ENCODE measurements at regions of chr17 and their contacts with region 1.

Region 1: DNA sequence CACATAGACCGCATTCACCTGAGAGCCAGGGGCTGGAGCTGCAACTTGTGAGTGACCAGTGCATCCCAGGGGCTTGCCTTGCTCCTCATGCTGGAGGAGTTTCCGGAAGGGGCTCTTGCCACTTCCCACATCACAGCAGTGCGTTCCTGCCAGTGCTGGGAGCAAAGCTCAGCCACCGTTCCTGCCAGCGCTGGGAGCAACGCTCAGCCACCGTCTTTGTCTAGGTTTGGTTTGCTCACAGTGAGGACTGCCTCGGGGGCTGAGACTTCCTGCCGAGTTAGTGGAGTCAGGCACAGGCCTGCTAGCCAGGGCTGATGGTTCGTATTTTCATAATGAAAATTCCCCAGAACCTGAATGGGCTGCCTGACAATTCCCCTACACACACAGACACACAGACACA is 5.4 kb upstream of the CHRNE start:
- DNase-seq: no peak
- H3K4me3 ChIP-seq: no peak overlapping the region
- H3K27ac ChIP-seq: no peak overlapping the region
- H3K4me1 ChIP-seq: no peaks in the 10 kb centered on the region
- H3K27me3 ChIP-seq: no peaks in the 10 kb centered on the region
- CTCF ChIP-seq: no peak
- EP300 ChIP-seq: no peak
- POLR2A ChIP-seq: no peak

Region 2: DNA sequence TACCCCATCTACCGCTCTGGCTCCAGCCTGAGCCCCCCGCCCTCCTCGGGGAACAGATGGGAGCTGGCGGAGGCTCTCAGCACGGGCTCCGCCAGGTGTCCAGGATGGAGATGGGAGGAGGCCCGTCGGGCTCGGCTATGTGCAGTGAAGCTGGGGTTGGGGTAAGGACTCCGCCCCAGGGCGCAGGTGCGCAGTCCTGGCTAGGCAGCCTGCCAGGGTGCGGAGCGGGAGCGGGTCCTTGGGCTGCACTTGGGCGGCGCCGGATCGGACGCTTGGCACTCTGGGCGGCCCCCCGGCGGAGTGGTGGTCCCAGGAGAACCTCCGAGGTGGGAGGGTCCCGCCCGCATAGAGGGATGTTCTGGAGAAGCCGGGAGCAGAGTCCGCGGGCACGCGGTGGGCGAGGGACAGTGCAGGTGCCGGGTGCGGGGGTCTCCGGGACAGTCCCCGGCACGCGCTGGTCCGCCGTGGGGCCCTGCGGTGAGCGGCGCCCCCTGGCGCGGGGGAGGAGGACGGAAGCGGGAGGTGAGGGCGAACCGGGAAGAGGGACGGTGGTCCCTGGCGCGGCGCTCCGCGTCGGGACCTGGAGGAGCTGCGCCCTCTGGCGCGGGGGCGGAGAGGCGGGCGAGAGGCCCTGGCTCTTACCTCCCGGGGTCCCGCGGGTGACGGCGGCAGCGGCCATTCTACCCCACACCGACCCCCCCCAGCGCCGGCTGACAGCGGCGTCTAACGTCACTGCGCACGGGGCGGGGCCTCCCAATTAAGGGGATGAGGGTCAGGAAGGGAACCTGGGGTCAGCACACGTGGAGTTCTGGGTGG is 78.9 kb after region 1 on chr17 and contains the start of gene CAMTA2:
- intact Hi-C with region 1: loop called in 1 of 4 experiments (anchors 5 kb)
- DNase-seq: peak; percentile 90 to 93 (median 92)
- H3K4me3 ChIP-seq: peak within 1 kb of the TSS; percentile 51
- H3K27ac ChIP-seq: peak within 1 kb of the TSS; percentile 95 to 97
- H3K4me1 ChIP-seq: peaks cover 11% of the 10 kb centered on the region
- H3K27me3 ChIP-seq: no peaks in the 10 kb centered on the region
- CTCF ChIP-seq: peak; percentile 50 to 83 (median 79)
- EP300 ChIP-seq: no peak
- POLR2A ChIP-seq: peak; percentile 72
- total RNA-seq, gene CAMTA2: 10.2 to 71.2 (median 35.7) TPM

Region 3: DNA sequence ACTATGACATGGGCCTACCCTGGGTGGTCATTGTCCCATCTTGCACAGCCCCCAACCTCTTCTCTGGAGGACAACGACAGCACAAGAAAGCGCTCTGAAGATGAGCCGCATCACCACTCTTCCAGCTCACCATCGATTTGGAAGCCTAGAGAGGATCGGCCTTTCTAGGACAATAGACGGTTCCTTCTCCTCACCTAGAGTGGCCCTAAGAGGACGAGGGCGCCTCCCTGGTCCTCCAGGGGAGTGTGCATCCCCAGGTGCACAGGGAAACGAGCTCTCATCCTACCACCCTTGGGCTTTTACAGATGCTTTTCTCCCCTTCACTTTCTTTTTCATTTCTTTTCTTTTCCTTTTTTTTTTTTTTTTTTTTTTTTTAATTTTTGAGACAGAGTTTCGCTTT is 147.2 kb after region 1 on chr17:
- intact Hi-C with region 1: loop called in 2 of 4 experiments (anchors 5 to 10 kb)
- DNase-seq: no peak
- H3K4me3 ChIP-seq: no peak overlapping the region
- H3K27ac ChIP-seq: no peak overlapping the region
- H3K4me1 ChIP-seq: no peaks in the 10 kb centered on the region
- H3K27me3 ChIP-seq: no peaks in the 10 kb centered on the region
- CTCF ChIP-seq: no peak
- EP300 ChIP-seq: no peak
- POLR2A ChIP-seq: no peak